Activated T-helper 2 cell treated with anti-CD3 and anti-CD28 coated beads, Interferon-gamma antibody, Interleukin-2, Interleukin-4, amounts not matched to agents 10 μg/mL and 5 μg/mL and 100 μg/mL, durations not matched to agents 14 hours and 24 hours and 36 hours (primary cell): ENCODE measurements at regions of chr2 and their contacts with region 1.

Region 1: DNA sequence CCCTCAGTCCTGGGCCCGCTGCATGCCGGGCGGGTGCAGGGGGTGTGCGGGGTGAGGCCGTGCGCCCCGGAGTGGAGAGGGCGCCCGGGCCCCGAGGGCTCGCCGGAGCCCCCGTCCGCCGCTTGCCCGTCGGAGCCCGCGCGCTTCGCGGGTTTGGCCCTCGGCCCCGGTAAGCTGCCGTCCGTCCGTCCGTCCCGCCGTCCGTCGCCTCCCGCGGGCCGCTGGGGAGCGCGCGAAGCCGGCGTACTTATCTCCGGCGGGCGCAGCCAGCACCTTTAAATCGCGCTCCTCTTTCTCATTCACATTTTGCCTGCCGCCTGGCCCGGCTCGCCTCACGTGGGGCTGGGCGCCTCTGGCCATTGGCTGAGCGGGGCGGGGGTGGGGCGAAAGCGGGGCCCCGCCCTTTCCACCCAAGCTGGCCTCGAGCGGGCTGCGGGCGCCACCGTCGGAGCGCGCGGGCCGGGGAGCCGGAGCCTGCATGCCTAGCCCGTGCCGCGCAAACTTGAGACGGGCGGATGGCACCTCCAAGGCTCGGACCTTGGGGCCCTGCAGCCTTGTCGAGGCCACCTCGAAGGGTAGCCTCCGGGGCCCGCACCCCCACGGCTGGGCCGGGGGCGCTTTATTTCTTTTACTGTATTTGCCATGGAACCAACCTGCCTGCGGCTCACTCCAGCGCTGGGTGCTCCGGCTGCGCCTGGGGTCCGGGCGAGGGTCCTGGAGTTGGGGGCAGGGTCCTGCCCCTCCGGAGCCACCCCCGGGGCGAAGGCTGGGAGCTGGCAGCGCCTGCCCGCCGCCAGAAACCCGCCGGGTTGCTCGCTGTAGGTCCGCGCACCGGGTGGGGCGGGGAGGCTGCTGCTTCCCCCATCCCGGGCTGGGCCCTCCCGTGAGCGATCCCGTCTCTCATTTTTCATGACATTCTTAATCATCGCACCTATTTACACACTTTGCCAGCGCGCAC is at the start of gene GBX2:
- DNase-seq: no peak
- H3K4me3 Mint-ChIP-seq: no peak within 1 kb of the TSS
- H3K27ac Mint-ChIP-seq: peak within 1 kb of the TSS; percentile 47
- H3K4me1 Mint-ChIP-seq: no peaks in the 10 kb centered on the region
- H3K27me3 Mint-ChIP-seq: peaks cover 62% of the 10 kb centered on the region
- total RNA-seq, gene GBX2: not detected in 2 replicates

Region 2: GRCh38 chr2:235493775-235494715 is 674.3 kb before region 1 on chr2 and contains the start of gene AGAP1:
- intact Hi-C with region 1: loop called (anchors 5 kb)
- DNase-seq: no peak
- H3K4me3 Mint-ChIP-seq: peak within 1 kb of the TSS; percentile 84
- H3K27ac Mint-ChIP-seq: no peak within 1 kb of the TSS
- H3K4me1 Mint-ChIP-seq: peaks cover 2% of the 10 kb centered on the region
- H3K27me3 Mint-ChIP-seq: peaks cover 53% of the 10 kb centered on the region
- total RNA-seq, gene AGAP1: 1.8 and 2.2 TPM in 2 replicates

Region 3: GRCh38 chr2:235669269-235669831 is 499.0 kb before region 1 on chr2:
- intact Hi-C with region 1: loop called (anchors 5 kb)
- DNase-seq: no peak
- H3K4me3 Mint-ChIP-seq: no peak overlapping the region
- H3K27ac Mint-ChIP-seq: no peak overlapping the region
- H3K4me1 Mint-ChIP-seq: peaks cover 1% of the 10 kb centered on the region
- H3K27me3 Mint-ChIP-seq: peaks cover 62% of the 10 kb centered on the region

Region 4: DNA sequence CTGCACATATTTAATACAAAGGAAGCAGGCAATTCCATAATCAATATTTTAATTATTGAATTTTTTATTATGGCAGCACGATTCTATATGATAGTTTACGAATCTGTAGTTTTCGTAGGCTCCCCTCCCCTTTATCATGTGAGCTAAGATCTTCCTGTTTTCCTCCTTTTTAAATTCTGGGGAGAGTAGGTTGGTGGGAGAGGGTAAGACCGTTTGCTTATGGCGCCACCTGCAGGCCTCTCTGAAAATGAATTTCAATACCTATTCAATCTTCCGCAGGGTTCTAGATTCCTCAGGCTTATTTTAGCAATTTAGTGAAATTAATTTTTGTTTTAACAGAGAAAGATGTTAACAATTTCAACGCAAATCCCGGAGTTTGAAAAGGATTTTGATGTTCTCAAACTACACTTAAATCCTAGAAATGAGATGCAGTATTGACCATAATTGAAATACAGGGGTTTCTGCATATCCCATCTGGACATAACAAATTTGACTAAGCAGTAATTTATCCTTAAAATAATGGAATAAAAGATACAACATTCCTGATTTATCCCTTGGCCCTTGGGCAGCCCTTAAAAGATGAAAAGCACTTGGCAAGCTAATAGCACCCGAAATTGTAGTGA is 12.6 kb after region 1 on chr2:
- intact Hi-C with region 1: loop called (anchors 2 kb)
- DNase-seq: no peak
- H3K4me3 Mint-ChIP-seq: no peak overlapping the region
- H3K27ac Mint-ChIP-seq: peak overlapping the region; percentile 55
- H3K4me1 Mint-ChIP-seq: peaks cover 4% of the 10 kb centered on the region
- H3K27me3 Mint-ChIP-seq: peaks cover 31% of the 10 kb centered on the region

Region 5: DNA sequence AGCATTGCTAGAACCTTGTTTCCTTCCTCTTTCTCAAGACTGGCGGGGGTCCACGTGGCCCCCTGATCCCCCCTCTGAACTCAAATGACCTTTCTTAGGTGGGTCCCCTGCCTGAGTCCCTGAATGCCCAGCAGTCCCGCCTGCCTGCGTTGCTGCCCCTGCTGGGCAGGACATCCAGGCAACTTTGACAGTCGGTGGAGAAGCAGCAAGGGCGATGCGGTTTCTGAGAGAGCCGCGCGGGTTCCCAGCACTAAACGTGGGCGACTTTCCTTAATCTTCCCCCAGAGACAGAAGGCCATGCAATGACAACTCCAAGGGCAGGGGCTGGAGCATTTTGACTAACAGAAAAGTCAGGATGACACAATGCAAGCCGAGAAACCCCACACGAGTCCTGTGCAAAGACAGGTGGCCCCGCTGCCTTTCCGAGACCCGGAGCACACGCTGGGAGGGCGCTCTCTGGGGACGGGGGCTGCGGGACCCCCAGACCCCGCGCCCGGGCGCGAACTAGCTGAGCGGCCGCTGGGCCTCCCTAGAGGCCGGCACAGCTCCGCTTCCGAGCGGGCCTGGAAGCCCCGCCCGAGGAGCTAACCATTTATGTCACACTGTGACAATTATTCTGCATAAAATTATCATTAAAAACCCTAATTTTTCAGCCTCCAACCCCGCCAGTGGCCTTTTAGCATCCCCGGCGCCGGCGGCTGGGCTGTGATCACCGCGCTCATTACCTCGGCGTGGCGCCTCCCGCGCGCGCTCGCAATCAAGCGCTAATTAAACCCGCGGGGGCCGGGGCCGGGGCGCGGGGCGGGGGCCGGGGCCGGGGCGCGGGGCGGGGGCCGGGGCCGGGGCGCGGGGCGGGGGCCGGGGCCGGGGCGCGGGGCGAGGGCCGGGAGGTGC is 68.4 kb after region 1 on chr2:
- intact Hi-C with region 1: loop called (anchors 5 kb)
- DNase-seq: no peak
- H3K4me3 Mint-ChIP-seq: no peak overlapping the region
- H3K27ac Mint-ChIP-seq: no peak overlapping the region
- H3K4me1 Mint-ChIP-seq: no peaks in the 10 kb centered on the region
- H3K27me3 Mint-ChIP-seq: peaks cover 34% of the 10 kb centered on the region